HepG2 (cell line): ENCODE measurements at regions of chr3 and their contacts with region 1.

Region 1: DNA sequence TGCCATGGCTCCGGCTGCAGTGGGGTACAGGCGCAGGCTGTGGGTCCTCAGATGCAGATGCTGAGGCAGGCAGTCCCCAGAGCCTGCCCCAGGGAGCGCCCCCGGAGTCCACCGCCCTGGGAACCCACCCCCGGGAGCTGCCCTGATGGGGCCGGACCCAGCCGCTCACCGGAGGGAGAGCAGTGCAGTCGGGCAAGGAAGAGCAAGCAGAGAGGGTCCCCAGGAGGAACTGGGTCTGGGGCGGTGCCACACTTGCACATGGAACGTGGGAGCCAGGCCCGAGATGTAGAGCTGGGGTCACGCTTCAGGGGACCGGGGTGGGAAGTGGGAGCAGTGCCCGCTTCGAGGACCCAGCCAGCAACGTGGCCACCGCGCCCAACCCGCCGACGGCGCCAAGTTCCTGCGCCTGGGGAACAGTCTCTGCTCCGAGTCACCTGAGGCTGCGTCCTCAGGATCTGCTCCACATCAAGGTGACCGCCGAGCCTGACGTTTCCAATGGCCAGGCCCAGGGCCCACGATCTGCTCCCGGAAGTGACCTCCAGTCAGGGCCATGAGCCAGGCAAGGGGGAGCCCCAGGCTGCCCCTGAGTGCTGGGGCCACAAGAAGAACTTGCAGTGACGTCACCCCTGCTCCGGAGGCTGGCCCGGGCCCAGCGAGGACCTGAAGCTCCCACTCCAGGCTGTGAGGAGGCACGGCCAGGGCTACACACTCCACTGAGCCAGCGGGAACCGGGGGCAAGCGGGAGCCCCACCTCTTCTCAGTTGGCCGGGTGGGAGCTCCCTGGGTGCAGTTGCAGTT is 27.0 kb upstream of the TFG start:
- DNase-seq: no peak
- ATAC-seq: peak; percentile 50
- H3K4me3 ChIP-seq: no peak overlapping the region; a peak in 1 of 6 replicates
- H3K27ac ChIP-seq: no peak overlapping the region
- H3K4me1 ChIP-seq: peaks cover 25% of the 10 kb centered on the region
- H3K27me3 ChIP-seq: no peaks in the 10 kb centered on the region
- CTCF ChIP-seq: no peak
- EP300 ChIP-seq: no peak
- POLR2A ChIP-seq: no peak
- RAD21 ChIP-seq: no peak

Region 2: GRCh38 chr3:100761211-100761942 is 79.1 kb after region 1 on chr3:
- CTCF ChIA-PET with region 1: no interaction called
- POLR2A ChIA-PET with region 1: no interaction called
- in situ Hi-C with region 1: no loop called
- intact Hi-C with region 1: loop called (anchors 1 kb)
- DNase-seq: peak; percentile 2
- ATAC-seq: peak; percentile 99
- H3K4me3 ChIP-seq: no peak overlapping the region
- H3K27ac ChIP-seq: no peak overlapping the region
- H3K4me1 ChIP-seq: no peaks in the 10 kb centered on the region
- H3K27me3 ChIP-seq: no peaks in the 10 kb centered on the region; a peak in 1 of 5 replicates
- CTCF ChIP-seq: peak; percentile 47
- EP300 ChIP-seq: no peak
- POLR2A ChIP-seq: no peak
- RAD21 ChIP-seq: 0 out of 2 replicates have a peak, but pooled peaks have one; percentile 11